ENCODE measurements at regions of chr12 and their contacts with region 1.

Region 1: DNA sequence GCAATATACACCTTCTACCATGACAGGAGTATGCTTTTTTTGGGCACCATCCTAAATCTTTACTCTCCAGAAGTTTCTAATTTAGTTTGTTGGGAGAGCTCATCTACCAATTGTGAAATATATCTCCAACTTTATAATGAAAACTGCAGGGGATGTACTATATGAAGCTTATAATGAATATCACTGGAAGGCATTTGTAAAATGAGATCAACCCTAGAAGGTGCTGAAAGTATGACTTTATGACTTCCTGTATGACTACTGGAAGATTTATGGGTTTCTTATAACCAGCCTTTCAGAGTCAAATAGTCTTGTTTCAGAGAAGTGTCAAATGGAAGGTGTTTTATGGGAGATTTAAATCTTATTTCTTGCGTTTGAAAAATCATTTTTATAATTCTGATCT is 122.9 kb downstream of the MYRFL start:
- DNase-seq: no peak
- ATAC-seq: no peak
- H3K4me3 ChIP-seq: no peak overlapping the region
- H3K4me3 Mint-ChIP-seq: no peak overlapping the region
- H3K27ac ChIP-seq: no peak overlapping the region
- H3K27ac Mint-ChIP-seq: no peak overlapping the region
- H3K4me1 ChIP-seq: no peaks in the 10 kb centered on the region
- H3K4me1 Mint-ChIP-seq: no peaks in the 10 kb centered on the region
- H3K27me3 ChIP-seq: no peaks in the 10 kb centered on the region
- H3K27me3 Mint-ChIP-seq: no peaks in the 10 kb centered on the region
- CTCF ChIP-seq: no peak

Region 2: GRCh38 chr12:69925291-69925690 is 22.6 kb before region 1 on chr12:
- CTCF ChIA-PET with region 1: no interaction called
- POLR2A ChIA-PET with region 1: no interaction called
- intact Hi-C with region 1: loop called in 1 of 2 experiments (anchors 2 kb)
- DNase-seq: no peak
- ATAC-seq: no peak
- H3K4me3 ChIP-seq: no peak overlapping the region
- H3K4me3 Mint-ChIP-seq: no peak overlapping the region
- H3K27ac ChIP-seq: no peak overlapping the region
- H3K27ac Mint-ChIP-seq: no peak overlapping the region
- H3K4me1 ChIP-seq: no peaks in the 10 kb centered on the region
- H3K4me1 Mint-ChIP-seq: no peaks in the 10 kb centered on the region
- H3K27me3 ChIP-seq: peaks cover 3 to 4% of the 10 kb centered on the region in 2 experiments
- H3K27me3 Mint-ChIP-seq: peaks cover 16% of the 10 kb centered on the region
- CTCF ChIP-seq: no peak

Region 3: GRCh38 chr12:69961246-69961645 is 13.3 kb after region 1 on chr12:
- CTCF ChIA-PET with region 1: no interaction called
- POLR2A ChIA-PET with region 1: no interaction called
- intact Hi-C with region 1: no loop called
- DNase-seq: no peak
- ATAC-seq: no peak
- H3K4me3 ChIP-seq: no peak overlapping the region
- H3K4me3 Mint-ChIP-seq: no peak overlapping the region
- H3K27ac ChIP-seq: no peak overlapping the region
- H3K27ac Mint-ChIP-seq: no peak overlapping the region
- H3K4me1 ChIP-seq: no peaks in the 10 kb centered on the region
- H3K4me1 Mint-ChIP-seq: no peaks in the 10 kb centered on the region
- H3K27me3 ChIP-seq: no peaks in the 10 kb centered on the region
- H3K27me3 Mint-ChIP-seq: peaks cover 5% of the 10 kb centered on the region
- CTCF ChIP-seq: no peak

Measured in CD4-positive, alpha-beta T cell (primary cell).